Activated CD4-positive, alpha-beta T cell treated with anti-CD3 and anti-CD28 coated beads, Interleukin-2, amount 10 ng/mL, durations not matched to agents 7 days and 5 days (primary cell): ENCODE measurements at regions of chr17 and their contacts with region 1.

Region 1: DNA sequence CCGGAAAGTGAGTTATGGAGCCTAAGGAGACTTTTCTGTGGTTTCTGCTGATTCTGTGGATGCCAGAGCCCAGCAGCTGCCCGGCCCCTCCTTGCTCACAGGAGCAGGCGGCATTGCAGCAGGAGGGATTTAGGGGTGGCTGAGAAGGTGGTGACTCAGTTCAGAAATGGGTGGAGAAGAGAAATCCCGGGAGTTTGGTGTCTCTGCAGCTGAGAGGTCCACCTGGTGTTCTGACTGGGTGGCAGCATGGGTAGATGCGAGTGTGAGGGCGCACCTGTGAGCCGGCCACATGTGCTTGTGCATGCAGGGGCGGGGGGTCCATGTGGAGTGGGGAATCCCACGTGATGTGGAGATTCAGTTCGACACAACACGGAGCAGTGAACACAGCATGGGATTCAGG is 16.1 kb upstream of the SPPL2C start:
- DNase-seq: no peak
- H3K4me3 Mint-ChIP-seq: no peak overlapping the region
- H3K27ac Mint-ChIP-seq: no peak overlapping the region
- H3K4me1 Mint-ChIP-seq: peaks cover 5% of the 10 kb centered on the region
- H3K27me3 Mint-ChIP-seq: no peaks in the 10 kb centered on the region

Region 2: GRCh38 chr17:45640141-45640850 is 188.3 kb before region 1 on chr17:
- CTCF ChIA-PET with region 1: interaction called, 18 read pairs
- POLR2A ChIA-PET with region 1: no interaction called
- DNase-seq: peak; percentile 80
- H3K4me3 Mint-ChIP-seq: no peak overlapping the region
- H3K27ac Mint-ChIP-seq: no peak overlapping the region
- H3K4me1 Mint-ChIP-seq: peaks cover 11% of the 10 kb centered on the region
- H3K27me3 Mint-ChIP-seq: no peaks in the 10 kb centered on the region

Region 3: GRCh38 chr17:45813048-45813725 is 15.4 kb before region 1 on chr17:
- CTCF ChIA-PET with region 1: no interaction called
- POLR2A ChIA-PET with region 1: no interaction called
- DNase-seq: no peak
- H3K4me3 Mint-ChIP-seq: no peak overlapping the region
- H3K27ac Mint-ChIP-seq: no peak overlapping the region
- H3K4me1 Mint-ChIP-seq: no peaks in the 10 kb centered on the region
- H3K27me3 Mint-ChIP-seq: peaks cover 5% of the 10 kb centered on the region

Region 4: DNA sequence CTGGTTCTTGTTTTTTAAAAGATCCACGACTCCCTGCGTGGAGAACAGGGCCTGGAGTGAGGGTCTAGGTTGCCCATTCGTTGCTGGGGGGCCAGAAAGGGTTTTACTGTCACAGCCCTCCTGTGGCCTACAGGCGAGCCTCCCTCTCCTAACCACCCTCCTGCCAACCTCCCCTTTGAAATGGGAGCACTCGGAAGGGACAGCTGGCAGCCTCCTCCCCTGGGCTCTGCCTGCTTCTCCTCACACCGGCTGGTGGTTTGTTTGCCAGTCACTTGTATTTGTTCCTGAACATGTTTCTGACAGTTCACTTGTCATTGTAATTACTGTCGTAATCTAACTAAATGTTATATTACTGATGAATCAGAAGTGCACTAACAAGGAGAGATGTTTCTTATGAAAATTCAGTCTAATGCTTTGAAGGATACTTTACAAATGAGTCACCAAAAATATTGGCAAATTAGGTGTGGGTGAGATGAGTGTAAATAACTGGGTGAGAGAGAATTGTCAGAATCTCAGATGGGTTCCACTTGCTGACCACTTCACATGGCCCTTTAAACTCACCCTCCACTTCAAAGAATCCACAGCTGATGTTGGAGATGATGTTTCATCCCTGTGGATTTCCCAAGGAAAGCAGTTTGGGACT is 13.4 kb after region 1 on chr17:
- CTCF ChIA-PET with region 1: no interaction called
- POLR2A ChIA-PET with region 1: no interaction called
- DNase-seq: no peak
- H3K4me3 Mint-ChIP-seq: no peak overlapping the region
- H3K27ac Mint-ChIP-seq: no peak overlapping the region
- H3K4me1 Mint-ChIP-seq: no peaks in the 10 kb centered on the region
- H3K27me3 Mint-ChIP-seq: no peaks in the 10 kb centered on the region